ENCODE measurements at regions of chrX and their contacts with region 1.

Region 1: DNA sequence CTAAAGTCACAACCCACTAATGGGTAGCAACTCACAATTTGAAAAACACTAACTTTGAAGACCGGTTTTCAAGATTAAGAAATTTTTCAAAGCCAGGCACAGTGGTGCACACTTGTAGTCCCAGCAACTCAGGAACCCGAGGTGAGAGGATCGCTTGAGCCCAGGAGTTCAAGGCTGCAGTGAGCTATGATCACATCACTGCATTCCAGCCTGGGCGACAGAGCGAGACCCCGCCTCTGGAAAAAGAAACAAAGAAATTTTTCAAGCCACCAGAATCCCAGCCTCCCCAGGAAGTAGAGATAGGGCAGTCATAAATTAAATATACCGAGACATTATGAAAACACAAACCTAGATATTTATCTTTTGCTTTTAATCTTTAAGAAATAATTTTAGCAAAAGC is 13.0 kb downstream of the SMARCA1 start:
- H3K4me3 ChIP-seq: no peak overlapping the region
- H3K27ac ChIP-seq: no peak overlapping the region
- H3K4me1 ChIP-seq: no peaks in the 10 kb centered on the region; the same call in 1 of the 2 replicates
- CTCF ChIP-seq: no peak

Region 2: GRCh38 chrX:129522184-129523078 is 12.1 kb after region 1 on chrX:
- CTCF ChIA-PET with region 1: no interaction called
- POLR2A ChIA-PET with region 1: interaction called, 12 read pairs
- H3K4me3 ChIP-seq: peak overlapping the region; percentile 74
- H3K27ac ChIP-seq: peak overlapping the region; percentile 89; the same call in 1 of the 2 replicates
- H3K4me1 ChIP-seq: peaks cover 3% of the 10 kb centered on the region; the same call in 1 of the 2 replicates
- CTCF ChIP-seq: no peak

Region 3: DNA sequence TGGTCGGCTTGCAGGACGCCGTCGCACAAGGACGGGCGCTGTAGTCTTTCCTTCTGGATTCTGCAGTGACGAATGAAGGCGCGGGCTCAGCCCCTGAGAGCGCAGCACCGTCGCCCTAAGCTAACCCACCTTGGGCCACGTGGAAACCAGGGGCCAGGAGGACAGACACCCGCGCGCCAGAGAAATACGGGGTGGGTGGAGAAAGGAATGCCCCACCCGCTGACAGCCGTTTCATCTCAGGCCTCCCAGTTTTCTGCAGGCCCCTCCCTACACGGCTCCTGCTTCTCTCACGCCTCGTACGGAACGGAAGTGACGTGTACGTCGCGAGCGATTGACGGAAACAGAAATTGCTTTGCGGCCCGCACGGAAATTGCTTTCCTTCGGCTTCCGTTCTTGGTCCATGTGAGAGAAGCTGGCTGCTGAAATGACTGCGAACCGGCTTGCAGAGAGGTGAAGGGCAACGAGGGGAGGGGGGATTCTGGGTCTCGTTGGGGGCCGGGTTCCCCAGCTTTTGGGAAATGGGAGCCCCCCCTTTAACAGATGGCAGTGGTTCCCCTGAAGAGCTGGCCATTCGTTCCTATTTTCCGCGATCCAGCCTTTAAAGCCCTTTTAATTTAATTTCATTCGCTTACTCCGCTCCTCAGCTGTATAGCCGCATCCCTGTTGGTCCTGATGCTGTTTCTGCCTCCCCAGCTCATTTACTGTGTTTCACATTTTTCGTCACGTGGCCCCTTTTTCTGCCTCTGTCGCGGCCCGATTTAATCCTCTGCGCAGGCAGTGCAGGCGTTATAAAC is 395.7 kb after region 1 on chrX and contains the start of gene UTP14A:
- CTCF ChIA-PET with region 1: no interaction called
- POLR2A ChIA-PET with region 1: no interaction called
- H3K4me3 ChIP-seq: peak within 1 kb of the TSS; percentile 65
- H3K27ac ChIP-seq: peak within 1 kb of the TSS; percentile 75
- H3K4me1 ChIP-seq: no peaks in the 10 kb centered on the region
- CTCF ChIP-seq: no peak

Measured in HEK293 (cell line).